PC-3 (cell line): ENCODE measurements at regions of chr2 and their contacts with region 1.

Region 1: DNA sequence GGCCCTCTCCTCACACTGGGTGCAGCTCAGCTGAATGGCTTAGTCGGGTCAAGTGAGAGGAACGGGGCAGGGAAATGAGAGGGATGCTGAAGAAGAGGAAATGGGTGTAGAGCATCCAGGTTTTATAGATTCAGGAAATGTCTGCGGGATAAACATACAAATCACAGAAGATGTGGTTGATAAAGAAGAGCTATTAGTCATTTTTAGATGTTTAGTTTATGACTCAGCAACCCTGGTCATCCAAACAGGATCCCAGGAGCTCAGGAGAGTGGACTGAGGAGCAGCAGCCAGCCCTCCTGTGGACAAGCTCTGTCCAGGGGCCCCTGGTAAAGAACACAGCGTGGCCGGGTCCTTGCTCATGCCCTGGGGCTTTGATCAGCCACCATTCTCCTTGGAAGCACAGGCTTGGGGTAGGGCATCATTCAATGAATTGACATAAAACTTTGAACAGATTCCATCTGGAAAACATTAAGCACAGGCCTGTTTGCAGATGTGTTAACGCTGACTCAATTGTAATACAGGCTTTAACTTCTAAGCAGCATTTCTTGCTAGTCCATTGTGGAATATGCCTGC is 83.0 kb downstream of the NPAS2 start:
- DNase-seq: peak; percentile 97
- ATAC-seq: peak; percentile 85
- H3K4me3 ChIP-seq: no peak overlapping the region; the same call in 1 of the 2 replicates
- H3K27ac ChIP-seq: peak overlapping the region; percentile 100
- H3K4me1 ChIP-seq: peaks cover 57% of the 10 kb centered on the region
- H3K27me3 ChIP-seq: no peaks in the 10 kb centered on the region
- CTCF ChIP-seq: peak; percentile 29; the same call in 1 of the 2 replicates

Region 2: DNA sequence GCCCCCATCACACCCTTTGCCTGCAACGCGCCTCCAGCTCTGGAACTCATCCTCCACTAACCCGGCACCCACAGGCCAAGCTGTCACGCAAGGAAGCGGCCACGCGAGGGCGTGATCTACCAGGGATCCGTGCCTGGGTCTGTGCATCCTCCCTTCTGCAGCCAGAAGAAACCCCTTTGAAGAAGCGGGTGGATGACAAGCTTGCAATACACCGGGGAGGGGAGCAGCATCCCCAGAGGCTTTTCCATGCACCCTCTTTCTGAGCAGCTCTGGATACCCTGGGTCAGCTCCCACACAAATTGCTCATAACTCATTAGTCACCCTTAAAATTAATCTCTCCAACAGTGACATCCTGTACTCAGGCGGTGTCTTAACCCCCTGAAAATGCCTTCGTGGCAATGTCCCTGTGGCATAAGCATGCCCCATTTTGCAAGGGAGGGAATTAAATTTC is 292.5 kb before region 1 on chr2:
- CTCF ChIA-PET with region 1: interaction called, 10 read pairs
- POLR2A ChIA-PET with region 1: no interaction called
- intact Hi-C with region 1: no loop called
- DNase-seq: peak; percentile 82
- ATAC-seq: peak; percentile 78
- H3K4me3 ChIP-seq: no peak overlapping the region
- H3K27ac ChIP-seq: no peak overlapping the region
- H3K4me1 ChIP-seq: peaks cover 9% of the 10 kb centered on the region; the same call in 1 of the 2 replicates
- H3K27me3 ChIP-seq: no peaks in the 10 kb centered on the region
- CTCF ChIP-seq: peak; percentile 90

Region 3: DNA sequence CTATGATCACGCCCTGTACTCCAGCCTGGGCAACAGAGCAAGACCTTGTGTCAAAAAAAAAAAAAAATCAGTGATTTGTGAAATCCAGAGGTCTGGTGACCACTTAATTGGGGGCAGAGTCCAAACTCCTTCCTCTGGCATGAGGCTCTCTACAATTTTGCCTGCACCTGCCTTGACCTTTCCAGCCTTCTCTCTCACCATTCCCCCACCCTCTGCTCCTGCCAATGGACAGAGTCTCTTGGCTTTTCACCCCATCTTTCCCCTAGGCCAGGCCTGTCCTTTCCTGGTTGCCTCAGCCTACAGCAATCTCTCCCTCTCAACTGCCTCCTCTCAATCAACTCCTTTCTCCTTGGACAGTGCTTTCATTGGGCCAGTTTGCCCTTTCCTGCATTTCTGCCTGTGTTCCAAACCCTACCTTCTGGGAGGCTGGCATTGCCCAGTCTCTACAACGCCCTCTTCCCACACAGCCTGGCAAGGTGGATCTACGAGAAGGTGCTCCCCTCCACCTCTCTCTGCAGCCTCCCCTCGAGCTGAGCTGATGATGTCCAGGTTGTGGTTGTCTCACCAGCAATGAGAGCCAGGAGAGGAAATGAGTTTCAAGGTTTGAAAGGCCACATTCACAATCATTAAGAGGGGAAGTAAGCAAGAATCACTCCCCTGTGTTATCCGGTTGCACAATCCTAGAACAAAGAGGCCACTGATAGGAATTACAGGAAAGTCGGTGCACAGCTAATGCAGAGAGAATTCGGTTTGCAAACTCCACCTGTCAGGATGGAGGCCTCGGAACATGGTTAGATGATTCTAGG is 122.5 kb before region 1 on chr2:
- CTCF ChIA-PET with region 1: no interaction called
- POLR2A ChIA-PET with region 1: no interaction called
- intact Hi-C with region 1: loop called (anchors 5 kb)
- DNase-seq: peak; percentile 96
- ATAC-seq: peak; percentile 84
- H3K4me3 ChIP-seq: no peak overlapping the region; the same call in 1 of the 2 replicates
- H3K27ac ChIP-seq: peak overlapping the region; percentile 99
- H3K4me1 ChIP-seq: peaks cover 48% of the 10 kb centered on the region
- H3K27me3 ChIP-seq: no peaks in the 10 kb centered on the region
- CTCF ChIP-seq: no peak

Region 4: DNA sequence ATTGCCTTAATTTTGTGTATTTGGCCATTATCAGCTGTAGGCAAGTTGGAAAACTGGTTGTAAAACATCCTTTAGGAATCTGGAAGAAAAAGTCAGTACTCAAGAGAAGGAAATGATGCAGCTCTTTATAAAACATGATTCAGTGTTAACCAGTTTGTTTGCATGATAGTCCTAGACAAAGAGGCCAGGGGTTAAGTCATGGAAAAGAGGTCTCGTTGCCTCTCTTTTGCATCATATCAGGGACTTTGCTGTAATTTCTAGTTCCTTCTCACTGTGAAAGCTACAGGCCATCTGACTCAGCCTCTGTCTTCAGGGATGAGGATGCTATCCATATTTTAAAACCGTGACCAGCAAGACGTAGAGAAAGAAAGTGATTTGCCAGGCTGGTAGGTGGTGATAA is 45.0 kb before region 1 on chr2:
- CTCF ChIA-PET with region 1: interaction called, 4 read pairs
- POLR2A ChIA-PET with region 1: interaction called, 5 read pairs
- intact Hi-C with region 1: loop called (anchors 5 kb)
- DNase-seq: peak; percentile 83
- ATAC-seq: peak; percentile 64
- H3K4me3 ChIP-seq: peak overlapping the region; percentile 8; the same call in 1 of the 2 replicates
- H3K27ac ChIP-seq: peak overlapping the region; percentile 89
- H3K4me1 ChIP-seq: peaks cover 68% of the 10 kb centered on the region
- H3K27me3 ChIP-seq: no peaks in the 10 kb centered on the region
- CTCF ChIP-seq: no peak